Activated B cell treated with CpG ODN at 0.5 μM for 24 hours (primary cell): ENCODE measurements at regions of chr17 and their contacts with region 1.

Region 1: GRCh38 chr17:12180644-12181261 is 160.1 kb downstream of the MAP2K4 start:
- DNase-seq: no peak
- ATAC-seq: no peak
- H3K4me3 Mint-ChIP-seq: no peak overlapping the region
- H3K27ac Mint-ChIP-seq: no peak overlapping the region
- H3K4me1 Mint-ChIP-seq: no peaks in the 10 kb centered on the region
- H3K27me3 Mint-ChIP-seq: no peaks in the 10 kb centered on the region
- CTCF ChIP-seq: peak; percentile 65

Region 2: GRCh38 chr17:12342609-12343435 is 162.1 kb after region 1 on chr17:
- CTCF ChIA-PET with region 1: no interaction called
- POLR2A ChIA-PET with region 1: no interaction called
- intact Hi-C with region 1: loop called (anchors 5 kb)
- DNase-seq: no peak
- ATAC-seq: peak; percentile 37
- H3K4me3 Mint-ChIP-seq: no peak overlapping the region
- H3K27ac Mint-ChIP-seq: no peak overlapping the region
- H3K4me1 Mint-ChIP-seq: no peaks in the 10 kb centered on the region
- H3K27me3 Mint-ChIP-seq: no peaks in the 10 kb centered on the region
- CTCF ChIP-seq: no peak

Region 3: DNA sequence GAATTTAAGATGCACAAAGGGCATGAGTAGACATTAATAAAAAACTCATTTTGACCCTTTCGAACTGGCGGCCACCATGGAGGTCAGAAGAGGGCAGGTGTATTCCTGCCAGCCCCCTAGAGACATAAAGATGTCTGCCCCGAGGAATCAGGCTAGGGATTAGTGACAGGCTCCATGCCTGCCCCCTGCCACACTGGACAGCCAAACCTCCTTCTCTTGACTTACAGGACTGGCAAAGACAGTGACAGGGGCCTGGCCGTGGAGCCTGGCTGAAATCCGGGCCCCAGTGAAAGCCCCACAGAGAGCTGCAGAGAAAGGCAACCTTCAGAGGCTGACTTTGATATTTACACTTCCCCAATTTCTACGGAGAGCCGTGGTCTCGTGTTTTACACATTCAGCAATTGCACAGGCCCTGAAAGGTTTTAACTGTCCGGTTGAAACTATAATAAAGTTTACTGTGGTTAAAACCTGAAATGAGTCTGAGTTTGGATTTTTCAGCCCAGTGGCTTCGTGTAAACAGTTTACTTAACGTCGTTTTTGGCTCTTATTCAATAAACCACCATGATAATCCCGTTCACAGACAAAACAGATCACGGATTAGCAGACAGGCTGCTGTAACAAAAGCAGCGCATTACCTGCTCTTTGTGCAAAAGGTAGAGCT is 241.0 kb after region 1 on chr17:
- CTCF ChIA-PET with region 1: no interaction called
- POLR2A ChIA-PET with region 1: no interaction called
- intact Hi-C with region 1: no loop called
- DNase-seq: no peak
- ATAC-seq: peak; percentile 50
- H3K4me3 Mint-ChIP-seq: no peak overlapping the region
- H3K27ac Mint-ChIP-seq: peak overlapping the region; percentile 81
- H3K4me1 Mint-ChIP-seq: peaks cover 12% of the 10 kb centered on the region
- H3K27me3 Mint-ChIP-seq: no peaks in the 10 kb centered on the region
- CTCF ChIP-seq: no peak

Region 4: GRCh38 chr17:12744298-12744697 is 563.5 kb after region 1 on chr17:
- CTCF ChIA-PET with region 1: interaction called, 3 read pairs
- POLR2A ChIA-PET with region 1: no interaction called
- intact Hi-C with region 1: loop called (anchors 1 kb)
- DNase-seq: no peak
- ATAC-seq: no peak
- H3K4me3 Mint-ChIP-seq: no peak overlapping the region
- H3K27ac Mint-ChIP-seq: no peak overlapping the region
- H3K4me1 Mint-ChIP-seq: no peaks in the 10 kb centered on the region
- H3K27me3 Mint-ChIP-seq: peaks cover 4% of the 10 kb centered on the region
- CTCF ChIP-seq: no peak

Region 5: GRCh38 chr17:13002766-13003451 is 822.2 kb after region 1 on chr17:
- CTCF ChIA-PET with region 1: interaction called, 17 read pairs
- POLR2A ChIA-PET with region 1: no interaction called
- intact Hi-C with region 1: loop called (anchors 1 kb)
- DNase-seq: peak; percentile 43
- ATAC-seq: peak; percentile 56
- H3K4me3 Mint-ChIP-seq: no peak overlapping the region
- H3K27ac Mint-ChIP-seq: no peak overlapping the region
- H3K4me1 Mint-ChIP-seq: no peaks in the 10 kb centered on the region
- H3K27me3 Mint-ChIP-seq: no peaks in the 10 kb centered on the region
- CTCF ChIP-seq: no peak

Region 6: GRCh38 chr17:13017659-13018459 is 837.1 kb after region 1 on chr17 and contains the start of gene ELAC2:
- CTCF ChIA-PET with region 1: interaction called, 4 read pairs
- POLR2A ChIA-PET with region 1: no interaction called
- intact Hi-C with region 1: loop called (anchors 5 kb)
- DNase-seq: peak; percentile 88
- ATAC-seq: peak; percentile 98
- H3K4me3 Mint-ChIP-seq: peak within 1 kb of the TSS; percentile 98
- H3K27ac Mint-ChIP-seq: peak within 1 kb of the TSS; percentile 96
- H3K4me1 Mint-ChIP-seq: peaks cover 17% of the 10 kb centered on the region
- H3K27me3 Mint-ChIP-seq: peaks cover 2% of the 10 kb centered on the region
- CTCF ChIP-seq: no peak
- total RNA-seq, gene ELAC2: 90.3 and 90.6 TPM in 2 replicates

Region 7: GRCh38 chr17:13031718-13032350 is 851.1 kb after region 1 on chr17:
- CTCF ChIA-PET with region 1: interaction called, 7 read pairs
- POLR2A ChIA-PET with region 1: no interaction called
- intact Hi-C with region 1: loop called (anchors 1 kb)
- DNase-seq: no peak
- ATAC-seq: peak; percentile 84
- H3K4me3 Mint-ChIP-seq: no peak overlapping the region
- H3K27ac Mint-ChIP-seq: no peak overlapping the region
- H3K4me1 Mint-ChIP-seq: peaks cover 3% of the 10 kb centered on the region
- H3K27me3 Mint-ChIP-seq: peaks cover 4% of the 10 kb centered on the region
- CTCF ChIP-seq: peak; percentile 54